Mammary epithelial cell (primary cell): ENCODE measurements at regions of chr14 and their contacts with region 1.

Region 1: GRCh38 chr14:51094901-51095853 is at the start of gene TRIM9:
- DNase-seq: peak; percentile 97
- H3K4me3 ChIP-seq: peak within 1 kb of the TSS; percentile 46 to 69 (median 58)
- H3K27ac ChIP-seq: no peak within 1 kb of the TSS
- H3K4me1 ChIP-seq: peaks cover 21% of the 10 kb centered on the region
- H3K27me3 ChIP-seq: peaks cover 13% of the 10 kb centered on the region
- CTCF ChIP-seq: no peak
- total RNA-seq, gene TRIM9: 0.14 to 0.67 TPM

Region 2: GRCh38 chr14:51219473-51220448 is 124.6 kb after region 1 on chr14:
- CTCF ChIA-PET with region 1: no interaction called
- dilution Hi-C with region 1: no loop called
- in situ Hi-C with region 1: no loop called
- intact Hi-C with region 1: loop called (anchors 5 kb)
- DNase-seq: no peak
- H3K4me3 ChIP-seq: no peak overlapping the region
- H3K27ac ChIP-seq: no peak overlapping the region
- H3K4me1 ChIP-seq: no peaks in the 10 kb centered on the region
- H3K27me3 ChIP-seq: no peaks in the 10 kb centered on the region
- CTCF ChIP-seq: peak; percentile 53 to 65